Activated T-helper 2 cell treated with anti-CD3 and anti-CD28 coated beads, Interferon-gamma antibody, Interleukin-2, Interleukin-4, amounts not matched to agents 10 μg/mL and 5 μg/mL and 100 μg/mL, durations not matched to agents 14 hours and 24 hours and 36 hours (primary cell): ENCODE measurements at regions of chr5 and their contacts with region 1.

Region 1: GRCh38 chr5:18699681-18700080 is 1065.4 kb downstream of the TAF11L14 start:
- DNase-seq: no peak
- H3K4me3 Mint-ChIP-seq: no peak overlapping the region
- H3K27ac Mint-ChIP-seq: no peak overlapping the region
- H3K4me1 Mint-ChIP-seq: peaks cover 19% of the 10 kb centered on the region
- H3K27me3 Mint-ChIP-seq: no peaks in the 10 kb centered on the region

Region 2: DNA sequence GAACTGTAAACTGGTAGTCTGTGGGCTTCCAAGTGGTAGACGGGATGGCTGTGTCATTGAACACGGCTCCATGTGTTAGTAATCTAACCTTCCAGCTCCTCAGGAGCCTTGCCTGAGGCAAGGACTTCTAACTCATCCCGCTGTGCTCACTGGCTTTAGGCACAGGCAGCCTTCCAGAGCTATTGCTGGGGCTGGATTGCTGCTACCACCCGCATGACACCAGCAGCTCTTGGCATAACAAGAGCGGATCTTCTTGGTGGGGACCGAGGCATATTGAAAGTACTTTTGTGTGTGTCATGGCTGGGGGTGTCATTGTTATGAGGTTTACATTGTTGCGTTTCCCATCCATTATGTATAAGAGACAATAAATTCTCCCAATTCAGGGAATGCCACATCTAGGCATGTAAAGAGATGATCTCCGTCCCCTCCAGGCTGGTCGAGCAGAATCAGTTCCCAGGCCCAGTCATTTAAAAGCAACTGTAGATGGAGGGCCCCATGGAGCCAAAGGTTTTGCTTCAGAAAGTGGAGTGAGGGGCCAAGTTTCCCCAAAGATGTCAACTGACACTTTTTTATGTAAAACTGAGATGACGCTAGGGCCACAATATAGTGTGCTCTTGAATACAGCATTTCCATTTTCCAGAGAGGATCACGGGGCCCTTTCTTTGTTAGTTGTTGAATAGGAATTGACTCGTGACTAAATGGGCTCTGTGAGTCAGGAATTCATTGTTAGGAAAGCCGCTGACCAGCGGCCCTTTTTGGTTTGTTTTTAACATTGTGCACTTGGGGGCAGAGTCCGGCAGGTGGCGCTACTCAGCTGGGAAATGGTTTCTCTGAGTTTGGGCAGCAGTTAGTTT is 305.9 kb before region 1 on chr5:
- intact Hi-C with region 1: loop called (anchors 1 kb)
- DNase-seq: peak; percentile 16
- H3K4me3 Mint-ChIP-seq: no peak overlapping the region
- H3K27ac Mint-ChIP-seq: no peak overlapping the region
- H3K4me1 Mint-ChIP-seq: no peaks in the 10 kb centered on the region
- H3K27me3 Mint-ChIP-seq: no peaks in the 10 kb centered on the region

Region 3: GRCh38 chr5:18465833-18466591 is 233.7 kb before region 1 on chr5:
- intact Hi-C with region 1: loop called (anchors 1 kb)
- DNase-seq: peak; percentile 14
- H3K4me3 Mint-ChIP-seq: no peak overlapping the region
- H3K27ac Mint-ChIP-seq: no peak overlapping the region
- H3K4me1 Mint-ChIP-seq: no peaks in the 10 kb centered on the region
- H3K27me3 Mint-ChIP-seq: no peaks in the 10 kb centered on the region

Region 4: GRCh38 chr5:18745646-18746615 is 46.2 kb after region 1 on chr5:
- intact Hi-C with region 1: loop called (anchors 1 kb)
- DNase-seq: peak; percentile 38
- H3K4me3 Mint-ChIP-seq: peak overlapping the region; percentile 89
- H3K27ac Mint-ChIP-seq: peak overlapping the region; percentile 95
- H3K4me1 Mint-ChIP-seq: peaks cover 50% of the 10 kb centered on the region
- H3K27me3 Mint-ChIP-seq: no peaks in the 10 kb centered on the region